HepG2 (cell line): ENCODE measurements at regions of chr1 and their contacts with region 1.

Region 1: DNA sequence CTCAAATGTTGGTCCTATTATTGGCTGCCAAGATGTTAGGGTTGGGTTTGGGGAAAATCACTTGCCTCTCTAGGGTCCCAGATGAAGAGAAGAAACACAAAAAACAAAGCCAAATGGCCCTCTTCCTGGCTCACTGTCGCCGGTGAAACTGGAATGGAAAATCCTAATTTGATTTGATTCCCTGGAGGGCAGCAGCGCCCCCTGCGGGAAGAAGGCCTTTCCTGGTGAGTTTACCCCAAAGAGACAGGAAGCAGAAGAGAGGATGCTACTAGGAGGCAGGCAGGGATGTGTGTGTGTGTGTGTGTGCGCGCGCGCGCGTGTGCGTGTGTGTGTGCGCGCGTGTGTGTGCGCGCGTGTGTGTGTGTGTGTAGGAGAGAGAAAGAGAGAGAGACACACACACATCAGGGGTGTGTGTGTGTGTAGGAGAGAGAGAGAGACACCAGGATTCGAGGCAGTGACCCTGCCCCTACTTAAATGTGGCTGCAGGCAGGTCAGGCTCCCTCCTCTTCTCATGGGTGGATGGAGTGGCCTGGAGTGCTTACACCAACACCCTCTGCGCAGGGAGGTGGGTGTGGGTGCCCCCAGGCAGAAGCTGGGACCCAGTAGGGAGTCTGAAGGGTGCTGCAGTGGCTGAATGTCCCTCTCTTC is 3.1 kb upstream of the SELENON start:
- DNase-seq: peak; percentile 59
- ATAC-seq: peak; percentile 53
- H3K4me3 ChIP-seq: no peak overlapping the region
- H3K27ac ChIP-seq: no peak overlapping the region
- H3K4me1 ChIP-seq: peaks cover 28% of the 10 kb centered on the region
- H3K27me3 ChIP-seq: peaks cover 0 to 17% of the 10 kb centered on the region in 2 experiments; a peak in 2 of 5 replicates
- CTCF ChIP-seq: peak; percentile 90
- EP300 ChIP-seq: no peak
- POLR2A ChIP-seq: no peak
- RAD21 ChIP-seq: peak; percentile 75

Region 2: GRCh38 chr1:25608488-25609178 is 188.3 kb before region 1 on chr1:
- CTCF ChIA-PET with region 1: interaction called, 11 read pairs
- POLR2A ChIA-PET with region 1: interaction called, 3 read pairs
- in situ Hi-C with region 1: loop called (anchors 25 kb)
- intact Hi-C with region 1: no loop called
- DNase-seq: peak; percentile 62
- ATAC-seq: peak; percentile 89
- H3K4me3 ChIP-seq: peak overlapping the region in 1 of 3 experiments; percentile 23; a peak in 1 of 6 replicates
- H3K27ac ChIP-seq: no peak overlapping the region
- H3K4me1 ChIP-seq: peaks cover 12% of the 10 kb centered on the region; the same call in 1 of the 2 replicates
- H3K27me3 ChIP-seq: peaks cover 0 to 12% of the 10 kb centered on the region in 2 experiments; a peak in 2 of 5 replicates
- CTCF ChIP-seq: peak; percentile 83
- EP300 ChIP-seq: no peak
- POLR2A ChIP-seq: no peak
- RAD21 ChIP-seq: no peak

Region 3: GRCh38 chr1:25616095-25616986 is 180.6 kb before region 1 on chr1 and contains the start of gene MAN1C1:
- CTCF ChIA-PET with region 1: interaction called, 4 read pairs
- POLR2A ChIA-PET with region 1: no interaction called
- in situ Hi-C with region 1: loop called (anchors 25 kb)
- intact Hi-C with region 1: loop called (anchors 5 kb)
- DNase-seq: peak; percentile 71
- ATAC-seq: peak; percentile 89
- H3K4me3 ChIP-seq: peak within 1 kb of the TSS; percentile 58 to 75 (median 61)
- H3K27ac ChIP-seq: no peak within 1 kb of the TSS
- H3K4me1 ChIP-seq: peaks cover 11% of the 10 kb centered on the region
- H3K27me3 ChIP-seq: peaks cover 12 to 45% of the 10 kb centered on the region in 2 experiments
- CTCF ChIP-seq: peak; percentile 41
- EP300 ChIP-seq: no peak
- POLR2A ChIP-seq: no peak
- RAD21 ChIP-seq: peak; percentile 40; the same call in 1 of the 2 replicates
- total RNA-seq, gene MAN1C1: 0.15 and 0.49 TPM in 2 replicates

Region 4: GRCh38 chr1:25754470-25755181 is 42.3 kb before region 1 on chr1:
- CTCF ChIA-PET with region 1: interaction called, 13 read pairs
- POLR2A ChIA-PET with region 1: no interaction called
- in situ Hi-C with region 1: loop called (anchors 5 kb)
- intact Hi-C with region 1: loop called (anchors 5 kb)
- DNase-seq: no peak
- ATAC-seq: peak; percentile 52; the same call in 2 of the 3 replicates
- H3K4me3 ChIP-seq: no peak overlapping the region
- H3K27ac ChIP-seq: no peak overlapping the region
- H3K4me1 ChIP-seq: no peaks in the 10 kb centered on the region
- H3K27me3 ChIP-seq: peaks cover 10 to 78% of the 10 kb centered on the region in 2 experiments
- CTCF ChIP-seq: peak; percentile 50
- EP300 ChIP-seq: no peak
- POLR2A ChIP-seq: no peak
- RAD21 ChIP-seq: no peak

Region 5: DNA sequence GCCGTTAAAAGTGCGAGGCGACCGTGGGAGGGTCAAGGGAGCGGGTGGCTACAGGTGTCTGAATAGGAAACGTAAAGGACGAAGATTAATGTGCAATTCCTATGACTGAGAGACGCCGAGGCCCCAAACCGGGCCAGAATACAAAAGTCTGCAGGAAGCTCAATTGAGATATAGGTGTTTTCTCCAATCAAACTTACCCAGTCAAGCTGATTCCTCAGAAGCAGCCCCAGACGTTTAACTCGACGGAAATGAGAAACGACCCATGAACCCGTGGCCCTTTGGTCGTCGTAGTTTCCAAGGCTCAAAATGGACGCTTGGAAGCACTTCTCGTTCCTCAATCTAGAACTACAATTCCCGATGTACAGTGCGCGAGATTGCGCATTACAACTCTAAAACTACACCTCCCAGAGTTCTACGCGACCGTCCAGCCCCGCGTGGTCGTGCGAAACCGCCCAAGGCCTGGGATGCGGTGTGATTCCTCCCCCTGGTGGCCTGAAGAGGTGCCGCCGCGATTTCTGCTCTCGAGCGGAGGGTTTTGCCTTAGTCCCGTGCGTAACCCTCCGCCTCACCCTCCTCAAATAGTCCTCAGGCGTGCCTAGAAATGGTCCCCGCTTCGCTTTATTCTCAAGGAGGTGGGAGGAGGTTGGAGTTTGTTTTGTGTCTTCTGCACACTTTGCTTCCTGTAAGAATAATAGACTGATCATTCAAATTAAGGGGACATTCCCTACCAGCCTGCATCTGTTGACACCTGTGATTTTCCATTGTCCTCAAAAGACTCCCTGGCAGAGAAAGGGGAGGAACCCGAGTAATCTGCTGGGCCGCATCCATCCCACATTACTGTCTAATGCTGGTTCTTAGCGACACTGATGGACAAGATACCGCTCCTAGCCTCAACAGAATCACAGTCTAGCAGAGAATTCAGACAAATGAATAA is 201.2 kb after region 1 on chr1 and contains the start of gene PAFAH2:
- CTCF ChIA-PET with region 1: no interaction called
- POLR2A ChIA-PET with region 1: no interaction called
- in situ Hi-C with region 1: no loop called
- intact Hi-C with region 1: no loop called
- DNase-seq: peak; percentile 98
- ATAC-seq: peak; percentile 96
- H3K4me3 ChIP-seq: peak within 1 kb of the TSS; percentile 81 to 85 (median 82)
- H3K27ac ChIP-seq: peak within 1 kb of the TSS; percentile 78
- H3K4me1 ChIP-seq: peaks cover 36% of the 10 kb centered on the region
- H3K27me3 ChIP-seq: no peaks in the 10 kb centered on the region; a peak in 1 of 5 replicates
- CTCF ChIP-seq: peak; percentile 100
- EP300 ChIP-seq: peak in 1 of 2 experiments; percentile 57; a peak in 2 of 4 replicates
- POLR2A ChIP-seq: no peak; a peak in 1 of 4 replicates
- RAD21 ChIP-seq: peak; percentile 98
- total RNA-seq, gene PAFAH2: 6.9 and 9.2 TPM in 2 replicates